Left colon (tissue), 2 donors: ENCODE measurements at regions of chr1 and their contacts with region 1.

Region 1: GRCh38 chr1:145918144-145918992 is at the start of gene PEX11B:
- DNase-seq: peak; percentile 89 to 93
- ATAC-seq: peak; percentile 93
- total RNA-seq, gene PEX11B: 33.8 to 37.1 TPM

Region 2: GRCh38 chr1:145858894-145859490 is 59.4 kb before region 1 on chr1 and contains the start of gene PIAS3:
- intact Hi-C with region 1: no loop called
- DNase-seq: peak; percentile 96 to 97
- ATAC-seq: peak; percentile 93
- total RNA-seq, gene PIAS3: 11.0 to 11.4 TPM

Region 3: DNA sequence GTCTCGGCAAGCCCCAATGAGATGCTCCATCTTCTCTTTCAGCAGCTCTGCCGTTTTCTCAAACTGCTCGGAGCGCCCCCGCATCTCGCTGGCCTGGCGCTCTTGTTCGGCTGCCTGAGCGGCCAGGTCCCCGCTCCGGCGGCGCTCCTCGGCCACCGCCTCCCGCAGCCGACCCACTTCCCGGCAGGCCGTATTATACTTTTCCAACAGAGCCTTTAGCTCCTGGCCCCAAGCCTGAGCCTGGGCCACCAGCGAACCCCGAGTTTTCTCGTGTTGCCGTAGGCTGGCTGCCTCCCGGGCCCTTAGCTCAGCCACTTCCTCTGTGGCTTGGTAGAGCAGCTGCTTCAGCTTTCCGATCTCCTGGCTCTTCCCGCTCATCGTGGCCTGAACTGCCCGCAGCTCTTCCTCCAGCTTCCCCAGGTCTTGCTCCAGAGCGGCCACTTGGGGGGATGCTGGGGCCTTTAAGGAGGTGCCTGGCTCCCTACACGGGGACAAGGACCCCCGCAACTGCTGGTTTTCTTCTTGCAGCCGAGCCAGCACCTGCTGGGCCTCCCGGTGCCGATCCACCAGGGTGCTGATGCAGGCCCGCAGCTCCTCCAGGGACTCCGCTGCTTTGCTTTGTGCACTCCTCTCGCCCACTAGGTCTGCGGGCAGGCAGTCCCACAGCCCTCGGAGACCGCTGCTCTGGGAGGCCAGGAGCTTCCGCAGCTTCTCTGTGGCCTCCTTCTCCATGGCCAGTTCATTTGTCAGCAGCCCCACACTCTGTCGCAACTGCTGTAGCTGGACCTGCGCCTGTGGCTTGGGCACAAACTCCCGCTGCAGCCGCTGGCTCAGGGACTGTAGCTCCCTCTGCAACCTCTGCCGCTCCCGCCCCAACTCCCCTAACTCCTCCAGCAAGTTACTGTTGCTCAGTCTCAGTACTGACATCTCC is 46.1 kb before region 1 on chr1:
- intact Hi-C with region 1: no loop called
- DNase-seq: peak; percentile 39 to 41
- ATAC-seq: peak; percentile 51

Region 4: GRCh38 chr1:145963995-145964901 is 45.9 kb after region 1 on chr1 and contains the starts of genes ANKRD34A and POLR3GL:
- intact Hi-C with region 1: loop called in 1 of 2 experiments (anchors 10 kb)
- DNase-seq: peak; percentile 97 to 98
- ATAC-seq: peak; percentile 95
- total RNA-seq, gene ANKRD34A: 0.27 to 0.42 TPM
- total RNA-seq, gene POLR3GL: 13.6 to 17.0 TPM